ENCODE measurements at regions of chr9 and their contacts with region 1.

Region 1: DNA sequence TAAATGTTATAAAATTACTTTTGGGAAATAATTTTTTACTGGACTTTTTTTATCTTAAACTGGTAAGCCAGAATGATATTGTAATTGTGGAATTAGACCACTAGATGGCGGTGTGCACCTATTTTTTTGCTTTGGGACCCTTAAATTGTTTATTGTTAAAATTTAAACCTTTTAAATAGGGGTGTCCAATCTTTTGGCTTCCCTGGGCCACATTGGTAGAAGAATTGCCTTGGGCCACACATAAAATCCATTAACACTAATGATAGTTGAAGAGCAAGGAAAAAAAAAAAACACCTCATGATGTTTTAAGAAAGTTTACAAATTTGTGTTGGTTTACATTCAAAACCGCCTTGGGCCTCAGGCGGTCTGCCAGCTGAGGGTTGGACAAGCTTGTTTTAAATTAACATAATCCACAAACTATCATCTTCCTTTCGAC is 28.4 kb upstream of the GADD45G start:
- DNase-seq: no peak
- CTCF ChIP-seq: peak; percentile 43

Region 2: DNA sequence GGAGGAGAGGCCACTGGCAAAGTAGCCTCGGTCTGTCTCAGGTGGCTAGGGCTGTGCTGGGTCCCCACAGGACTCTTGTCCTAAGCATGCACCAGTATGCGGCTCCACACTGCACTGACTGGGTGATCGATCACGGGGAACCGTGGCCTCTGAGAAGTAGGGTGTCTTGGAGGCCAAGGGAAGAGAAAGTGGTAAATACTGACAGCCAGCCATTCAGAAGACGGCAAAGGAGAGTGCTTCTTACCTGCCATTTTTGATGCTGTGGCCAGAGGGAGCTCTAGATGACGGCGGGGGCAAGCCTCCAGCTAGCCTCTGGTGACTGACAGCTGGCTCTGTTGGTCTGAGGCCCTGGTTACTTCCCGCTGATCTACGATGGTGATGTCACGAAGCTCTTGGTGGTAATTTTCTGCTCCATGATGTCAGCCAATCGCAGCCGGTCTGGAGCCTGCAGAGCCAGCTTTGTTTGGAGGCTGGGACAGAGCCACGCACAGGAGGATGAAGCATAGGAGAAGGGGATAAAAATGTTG is 12.0 kb before region 1 on chr9:
- CTCF ChIA-PET with region 1: interaction called, 12 read pairs
- POLR2A ChIA-PET with region 1: no interaction called
- DNase-seq: peak; percentile 87
- CTCF ChIP-seq: peak; percentile 37

Region 3: DNA sequence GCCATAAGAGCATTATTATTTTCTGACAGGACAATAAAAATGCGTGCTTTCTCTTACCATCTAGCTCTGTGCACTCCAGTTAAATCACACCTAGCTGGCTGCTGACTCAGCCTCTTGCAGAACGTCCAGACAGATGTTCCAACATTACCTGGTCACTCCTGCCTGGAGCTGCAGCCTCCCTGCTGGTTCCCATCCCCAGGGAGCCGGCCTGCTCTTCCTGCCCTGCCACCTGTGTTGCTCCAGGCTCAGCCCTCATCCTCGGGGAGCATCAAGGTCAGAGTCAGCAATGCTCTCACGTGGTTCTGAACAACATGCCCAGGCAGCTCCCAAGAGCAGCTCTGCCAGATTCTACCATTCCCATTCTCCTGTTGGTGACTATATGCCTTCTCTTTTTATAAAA is 109.7 kb after region 1 on chr9:
- CTCF ChIA-PET with region 1: no interaction called
- POLR2A ChIA-PET with region 1: no interaction called
- DNase-seq: no peak
- CTCF ChIP-seq: no peak

Region 4: GRCh38 chr9:90102292-90102901 is 526.0 kb after region 1 on chr9:
- CTCF ChIA-PET with region 1: interaction called, 17 read pairs
- POLR2A ChIA-PET with region 1: no interaction called
- DNase-seq: peak; percentile 85
- CTCF ChIP-seq: peak; percentile 70